ENCODE measurements at regions of chrX and their contacts with region 1.

Region 1: GRCh38 chrX:110156167-110156754 is 153.3 kb downstream of the TMEM164 start:
- DNase-seq: no peak
- ATAC-seq: no peak
- H3K4me3 ChIP-seq: no peak overlapping the region
- H3K27ac ChIP-seq: no peak overlapping the region
- H3K4me1 ChIP-seq: peaks cover 2% of the 10 kb centered on the region; the same call in 1 of the 2 replicates
- H3K27me3 ChIP-seq: no peaks in the 10 kb centered on the region; the same call in 1 of the 2 replicates
- CTCF ChIP-seq: peak; percentile 59
- POLR2A ChIP-seq: no peak
- RAD21 ChIP-seq: peak; percentile 43

Region 2: GRCh38 chrX:110006821-110007375 is 149.4 kb before region 1 on chrX:
- CTCF ChIA-PET with region 1: no interaction called
- POLR2A ChIA-PET with region 1: no interaction called
- dilution Hi-C with region 1: no loop called
- in situ Hi-C with region 1: no loop called
- intact Hi-C with region 1: no loop called
- DNase-seq: peak; percentile 19
- ATAC-seq: no peak
- H3K4me3 ChIP-seq: no peak overlapping the region
- H3K27ac ChIP-seq: no peak overlapping the region
- H3K4me1 ChIP-seq: no peaks in the 10 kb centered on the region
- H3K27me3 ChIP-seq: peaks cover 3% of the 10 kb centered on the region; the same call in 1 of the 2 replicates
- CTCF ChIP-seq: no peak
- POLR2A ChIP-seq: no peak
- RAD21 ChIP-seq: no peak

Region 3: DNA sequence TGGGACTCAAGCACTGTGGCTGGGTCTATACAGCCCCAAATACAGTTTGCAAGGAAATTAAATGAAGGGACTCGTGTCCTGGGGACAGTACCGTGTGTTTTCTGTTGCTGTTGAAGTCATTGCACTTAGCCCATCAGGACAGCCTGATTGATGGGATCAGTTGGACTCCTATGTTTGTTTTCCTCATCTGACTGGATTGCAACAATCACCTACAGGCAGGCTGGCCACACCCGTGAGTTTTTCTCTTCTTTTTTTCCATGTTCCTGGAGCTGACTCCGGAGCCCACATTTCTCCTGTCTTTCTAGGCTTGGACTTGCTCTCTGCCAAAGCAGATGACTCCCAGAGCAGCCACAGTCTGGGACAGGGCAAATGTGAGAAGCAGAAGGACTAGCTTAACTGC is 240.5 kb after region 1 on chrX:
- CTCF ChIA-PET with region 1: no interaction called
- POLR2A ChIA-PET with region 1: no interaction called
- dilution Hi-C with region 1: no loop called
- in situ Hi-C with region 1: no loop called
- intact Hi-C with region 1: no loop called
- DNase-seq: no peak
- ATAC-seq: no peak
- H3K4me3 ChIP-seq: no peak overlapping the region
- H3K27ac ChIP-seq: no peak overlapping the region
- H3K4me1 ChIP-seq: peaks cover 7% of the 10 kb centered on the region
- H3K27me3 ChIP-seq: peaks cover 2% of the 10 kb centered on the region; the same call in 1 of the 2 replicates
- CTCF ChIP-seq: no peak
- POLR2A ChIP-seq: no peak
- RAD21 ChIP-seq: no peak

Region 4: GRCh38 chrX:110407910-110408545 is 251.8 kb after region 1 on chrX:
- CTCF ChIA-PET with region 1: interaction called, 9 read pairs
- POLR2A ChIA-PET with region 1: interaction called, 3 read pairs
- dilution Hi-C with region 1: no loop called
- in situ Hi-C with region 1: loop called (anchors 5 kb)
- intact Hi-C with region 1: loop called (anchors 1 kb)
- DNase-seq: peak; percentile 71
- ATAC-seq: peak; percentile 76
- H3K4me3 ChIP-seq: no peak overlapping the region
- H3K27ac ChIP-seq: no peak overlapping the region
- H3K4me1 ChIP-seq: peaks cover 10% of the 10 kb centered on the region
- H3K27me3 ChIP-seq: peaks cover 4% of the 10 kb centered on the region; the same call in 1 of the 2 replicates
- CTCF ChIP-seq: peak; percentile 83
- POLR2A ChIP-seq: no peak
- RAD21 ChIP-seq: peak; percentile 84

Region 5: GRCh38 chrX:110418316-110419235 is 262.3 kb after region 1 on chrX:
- CTCF ChIA-PET with region 1: interaction called, 9 read pairs
- POLR2A ChIA-PET with region 1: no interaction called
- dilution Hi-C with region 1: no loop called
- in situ Hi-C with region 1: loop called (anchors 5 kb)
- intact Hi-C with region 1: loop called (anchors 1 kb)
- DNase-seq: peak; percentile 86
- ATAC-seq: peak; percentile 77
- H3K4me3 ChIP-seq: no peak overlapping the region; the same call in 1 of the 2 replicates
- H3K27ac ChIP-seq: peak overlapping the region; percentile 72
- H3K4me1 ChIP-seq: peaks cover 11% of the 10 kb centered on the region
- H3K27me3 ChIP-seq: 0 out of 2 replicates have a peak, but pooled peaks cover 3% of the 10 kb centered on the region
- CTCF ChIP-seq: peak; percentile 60
- POLR2A ChIP-seq: no peak
- RAD21 ChIP-seq: peak; percentile 72

Region 6: GRCh38 chrX:110847334-110847733 is 691.1 kb after region 1 on chrX:
- CTCF ChIA-PET with region 1: no interaction called
- POLR2A ChIA-PET with region 1: no interaction called
- dilution Hi-C with region 1: no loop called
- in situ Hi-C with region 1: loop called (anchors 10 kb)
- intact Hi-C with region 1: loop called (anchors 5 kb)
- DNase-seq: peak; percentile 63
- ATAC-seq: peak; percentile 86
- H3K4me3 ChIP-seq: no peak overlapping the region
- H3K27ac ChIP-seq: no peak overlapping the region
- H3K4me1 ChIP-seq: no peaks in the 10 kb centered on the region
- H3K27me3 ChIP-seq: peaks cover 17% of the 10 kb centered on the region
- CTCF ChIP-seq: peak; percentile 66
- POLR2A ChIP-seq: no peak
- RAD21 ChIP-seq: peak; percentile 61

Region 7: DNA sequence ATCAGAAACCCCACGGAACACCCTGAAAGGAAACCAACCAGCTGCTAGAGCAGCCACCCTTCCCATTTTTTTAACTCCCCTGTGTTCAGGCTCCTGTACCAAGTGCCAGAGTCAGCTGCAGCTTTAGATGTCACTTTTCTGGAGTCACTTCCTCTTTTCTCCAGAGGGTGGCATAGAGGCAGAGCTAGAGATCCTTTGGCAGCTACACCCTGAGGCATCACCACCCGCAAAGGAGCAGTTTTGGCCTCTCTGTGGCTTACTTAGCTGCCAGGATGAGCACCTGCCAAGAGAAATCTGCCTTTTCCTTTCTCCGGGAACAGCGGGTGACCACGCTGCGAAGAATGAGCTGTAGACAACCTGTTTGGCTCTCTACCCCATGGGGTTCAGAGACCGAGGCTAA is 697.3 kb after region 1 on chrX:
- CTCF ChIA-PET with region 1: no interaction called
- POLR2A ChIA-PET with region 1: no interaction called
- dilution Hi-C with region 1: no loop called
- in situ Hi-C with region 1: loop called (anchors 10 kb)
- intact Hi-C with region 1: loop called (anchors 5 kb)
- DNase-seq: no peak
- ATAC-seq: 0 out of 2 replicates have a peak, but pooled peaks have one; percentile 29
- H3K4me3 ChIP-seq: no peak overlapping the region
- H3K27ac ChIP-seq: no peak overlapping the region
- H3K4me1 ChIP-seq: no peaks in the 10 kb centered on the region
- H3K27me3 ChIP-seq: peaks cover 24% of the 10 kb centered on the region
- CTCF ChIP-seq: 0 out of 2 replicates have a peak, but pooled peaks have one; percentile 24
- POLR2A ChIP-seq: no peak
- RAD21 ChIP-seq: no peak

Measured in IMR-90 (cell line).